Vagina (tissue), 2 donors: ENCODE measurements at regions of chr4 and their contacts with region 1.

Region 1: GRCh38 chr4:184156163-184156920 is 61.3 kb downstream of the ENPP6 start:
- DNase-seq: peak in 1 of 2 donors; percentile 69
- H3K4me3 ChIP-seq: peak overlapping the region in 1 of 2 donors; percentile 6
- H3K27ac ChIP-seq: peak overlapping the region; percentile 48
- H3K4me1 ChIP-seq: no peaks in the 10 kb centered on the region
- H3K27me3 ChIP-seq: no peaks in the 10 kb centered on the region
- CTCF ChIP-seq: no peak
- POLR2A ChIP-seq: no peak

Region 2: GRCh38 chr4:184100297-184100885 is 56.0 kb before region 1 on chr4:
- intact Hi-C with region 1: loop called (anchors 10 kb)
- DNase-seq: no peak
- H3K4me3 ChIP-seq: no peak overlapping the region
- H3K27ac ChIP-seq: no peak overlapping the region
- H3K4me1 ChIP-seq: peaks cover 8% of the 10 kb centered on the region
- H3K27me3 ChIP-seq: no peaks in the 10 kb centered on the region
- CTCF ChIP-seq: no peak
- POLR2A ChIP-seq: no peak

Region 3: GRCh38 chr4:184232206-184232820 is 76.0 kb after region 1 on chr4:
- intact Hi-C with region 1: no loop called
- DNase-seq: no peak
- H3K4me3 ChIP-seq: no peak overlapping the region
- H3K27ac ChIP-seq: no peak overlapping the region
- H3K4me1 ChIP-seq: no peaks in the 10 kb centered on the region
- H3K27me3 ChIP-seq: no peaks in the 10 kb centered on the region
- CTCF ChIP-seq: no peak
- POLR2A ChIP-seq: no peak